MCF 10A (cell line): ENCODE measurements at regions of chr12 and their contacts with region 1.

Region 1: DNA sequence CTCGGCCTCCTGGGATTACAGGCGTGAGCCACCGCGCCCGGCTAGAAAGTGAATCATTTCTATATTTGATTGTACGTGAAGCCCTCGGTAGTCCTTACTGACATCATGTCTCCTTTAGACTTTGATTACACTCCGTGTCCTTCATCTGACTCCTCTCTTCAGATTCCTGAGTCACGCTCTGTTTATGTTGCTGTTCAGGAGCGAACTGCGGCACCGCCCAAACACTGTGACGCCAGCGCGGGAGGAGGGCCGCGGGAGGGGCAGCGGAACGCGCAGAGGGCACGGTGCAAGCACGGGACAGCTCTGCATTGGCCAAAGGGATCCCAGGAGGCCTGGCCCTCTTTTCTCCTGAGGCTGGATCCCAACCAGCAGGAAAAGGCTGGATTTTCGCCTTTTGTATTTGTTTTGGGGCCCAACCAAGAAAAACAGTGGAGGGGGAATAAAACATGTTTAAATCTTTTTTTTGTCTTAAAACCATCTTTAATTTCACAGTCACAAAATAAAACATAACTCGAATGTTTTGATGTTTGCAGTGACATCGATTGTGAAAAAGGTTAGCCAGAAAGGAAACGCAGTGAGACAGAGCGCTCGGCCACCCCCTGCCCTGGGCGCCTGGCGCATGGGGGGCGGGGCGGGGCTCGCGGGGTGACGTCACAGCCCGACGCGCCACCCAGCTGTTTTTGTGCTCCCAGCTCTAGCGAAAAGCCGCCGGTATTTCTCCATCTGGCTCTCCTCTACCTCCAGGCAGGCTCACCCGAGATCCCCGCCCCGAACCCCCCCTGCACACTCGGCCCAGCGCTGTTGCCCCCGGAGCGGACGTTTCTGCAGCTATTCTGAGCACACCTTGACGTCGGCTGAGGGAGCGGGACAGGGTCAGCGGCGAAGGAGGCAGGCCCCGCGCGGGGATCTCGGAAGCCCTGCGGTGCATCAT is at the start of gene GABARAPL1:
- DNase-seq: peak; percentile 98
- H3K4me3 Mint-ChIP-seq: peak within 1 kb of the TSS; percentile 88
- H3K27ac Mint-ChIP-seq: peak within 1 kb of the TSS; percentile 99
- H3K4me1 Mint-ChIP-seq: peaks cover 21% of the 10 kb centered on the region
- H3K27me3 Mint-ChIP-seq: no peaks in the 10 kb centered on the region
- CTCF ChIP-seq: no peak
- total RNA-seq, gene GABARAPL1: 19.7 and 28.1 TPM in 2 replicates

Region 2: DNA sequence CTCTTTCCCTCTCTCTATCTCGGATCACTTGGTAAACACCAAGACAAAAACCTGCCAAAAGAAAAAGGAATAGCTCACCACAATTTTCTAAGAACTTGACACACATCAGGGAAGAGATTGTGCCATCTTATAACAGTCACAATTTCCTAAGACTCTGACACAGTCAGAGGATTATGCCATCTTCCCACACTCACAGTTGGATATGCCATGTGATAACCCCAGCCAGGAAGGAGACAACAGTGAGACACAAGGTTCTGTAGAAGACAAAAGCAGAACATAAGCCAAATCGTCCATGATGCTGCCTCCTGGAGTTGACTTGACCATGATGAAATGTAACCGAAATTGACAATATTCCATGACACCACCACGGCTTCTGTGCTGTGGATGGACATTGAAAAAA is 184.7 kb before region 1 on chr12:
- CTCF ChIA-PET with region 1: no interaction called
- POLR2A ChIA-PET with region 1: no interaction called
- intact Hi-C with region 1: loop called (anchors 10 kb)
- DNase-seq: peak; percentile 89
- H3K4me3 Mint-ChIP-seq: peak overlapping the region; percentile 53
- H3K27ac Mint-ChIP-seq: peak overlapping the region; percentile 94
- H3K4me1 Mint-ChIP-seq: peaks cover 35% of the 10 kb centered on the region
- H3K27me3 Mint-ChIP-seq: no peaks in the 10 kb centered on the region
- CTCF ChIP-seq: no peak

Region 3: DNA sequence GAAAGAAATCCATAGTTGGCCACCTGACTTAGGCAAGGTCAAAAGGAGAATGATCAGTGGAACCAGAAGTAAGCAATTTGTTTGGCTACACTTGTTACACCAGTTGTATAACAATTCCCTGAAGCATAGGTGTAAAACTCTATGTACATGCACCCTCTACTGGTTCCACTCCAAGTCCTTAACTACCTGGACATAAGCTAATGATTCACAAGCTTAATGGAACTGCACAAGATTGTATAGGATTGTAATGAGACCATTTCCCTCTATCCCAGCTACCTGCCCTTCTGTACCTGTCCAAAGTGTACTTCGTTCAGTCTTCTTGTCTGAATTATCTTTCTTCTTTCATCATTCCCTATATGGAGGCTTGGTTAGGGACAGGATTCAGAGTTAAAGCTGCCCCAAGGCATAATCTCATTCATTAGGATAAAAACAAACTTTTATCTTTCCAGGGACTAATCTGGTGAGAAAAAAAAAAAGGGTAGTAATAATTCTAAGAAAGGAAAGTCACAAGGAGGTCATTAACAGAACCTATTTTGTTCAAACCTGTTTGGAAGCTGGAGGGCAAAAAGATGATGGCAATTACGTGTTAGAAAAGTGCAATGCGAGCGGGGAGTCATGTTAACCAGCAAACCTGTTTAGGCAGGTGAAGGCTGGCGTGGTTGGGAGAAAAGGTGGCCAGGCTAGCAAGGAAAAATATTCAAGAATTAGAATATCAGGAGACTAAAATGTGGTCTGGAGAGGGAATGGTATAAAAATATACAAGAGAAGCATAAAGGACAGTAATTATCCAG is 36.4 kb before region 1 on chr12:
- CTCF ChIA-PET with region 1: interaction called, 3 read pairs
- POLR2A ChIA-PET with region 1: interaction called, 11 read pairs
- intact Hi-C with region 1: no loop called
- DNase-seq: peak; percentile 60
- H3K4me3 Mint-ChIP-seq: no peak overlapping the region
- H3K27ac Mint-ChIP-seq: no peak overlapping the region
- H3K4me1 Mint-ChIP-seq: peaks cover 19% of the 10 kb centered on the region
- H3K27me3 Mint-ChIP-seq: no peaks in the 10 kb centered on the region
- CTCF ChIP-seq: no peak

Region 4: GRCh38 chr12:10395390-10395998 is 183.0 kb after region 1 on chr12:
- CTCF ChIA-PET with region 1: no interaction called
- POLR2A ChIA-PET with region 1: interaction called, 20 read pairs
- intact Hi-C with region 1: no loop called
- DNase-seq: peak; percentile 93
- H3K4me3 Mint-ChIP-seq: peak overlapping the region; percentile 68
- H3K27ac Mint-ChIP-seq: peak overlapping the region; percentile 99
- H3K4me1 Mint-ChIP-seq: peaks cover 31% of the 10 kb centered on the region
- H3K27me3 Mint-ChIP-seq: no peaks in the 10 kb centered on the region
- CTCF ChIP-seq: no peak

Region 5: DNA sequence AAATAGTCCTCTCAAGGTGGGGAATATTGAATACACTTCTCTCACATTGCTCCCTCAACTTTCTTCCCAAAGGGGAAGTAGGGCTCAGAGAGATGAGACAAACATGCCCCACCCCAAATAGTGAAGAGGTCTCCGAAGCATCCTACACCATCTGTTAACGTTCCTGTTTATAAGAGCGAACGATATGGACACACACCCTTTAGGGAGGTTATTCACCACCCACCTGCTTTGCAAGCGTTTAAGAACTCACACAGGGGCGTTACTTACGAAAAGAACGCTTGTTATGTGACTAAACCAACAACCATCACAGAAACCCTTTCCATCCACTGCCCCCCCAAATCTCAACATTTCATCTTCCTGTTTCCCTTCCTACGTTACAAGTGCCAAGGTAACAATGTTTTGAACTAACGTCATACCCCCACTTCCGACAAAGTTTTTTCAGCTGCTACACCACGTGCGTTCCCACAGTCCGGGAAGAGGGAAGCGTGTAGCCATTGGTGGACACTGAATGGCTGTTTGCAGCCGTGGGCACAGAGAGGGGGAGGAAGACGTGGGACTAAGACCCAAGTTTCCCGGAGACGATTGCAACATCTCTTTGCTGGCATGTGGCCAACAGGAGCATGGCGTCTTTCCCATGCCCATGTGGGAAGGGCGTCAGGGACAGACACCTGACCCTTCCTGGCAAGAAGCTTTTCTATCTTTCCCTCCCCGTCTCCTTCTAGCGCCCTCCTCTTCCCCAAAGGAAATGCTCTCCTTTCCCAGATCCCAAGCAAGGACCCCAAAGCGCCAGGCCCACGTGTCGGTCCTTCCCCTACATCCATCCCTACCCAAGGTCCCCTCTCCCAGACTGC is 509.4 kb after region 1 on chr12:
- CTCF ChIA-PET with region 1: no interaction called
- POLR2A ChIA-PET with region 1: interaction called, 33 read pairs
- intact Hi-C with region 1: loop called (anchors 5 kb)
- DNase-seq: peak; percentile 99
- H3K4me3 Mint-ChIP-seq: peak overlapping the region; percentile 99
- H3K27ac Mint-ChIP-seq: peak overlapping the region; percentile 98
- H3K4me1 Mint-ChIP-seq: peaks cover 39% of the 10 kb centered on the region
- H3K27me3 Mint-ChIP-seq: no peaks in the 10 kb centered on the region
- CTCF ChIP-seq: no peak